PC-3 (cell line): ENCODE measurements at regions of chr20 and their contacts with region 1.

Region 1: DNA sequence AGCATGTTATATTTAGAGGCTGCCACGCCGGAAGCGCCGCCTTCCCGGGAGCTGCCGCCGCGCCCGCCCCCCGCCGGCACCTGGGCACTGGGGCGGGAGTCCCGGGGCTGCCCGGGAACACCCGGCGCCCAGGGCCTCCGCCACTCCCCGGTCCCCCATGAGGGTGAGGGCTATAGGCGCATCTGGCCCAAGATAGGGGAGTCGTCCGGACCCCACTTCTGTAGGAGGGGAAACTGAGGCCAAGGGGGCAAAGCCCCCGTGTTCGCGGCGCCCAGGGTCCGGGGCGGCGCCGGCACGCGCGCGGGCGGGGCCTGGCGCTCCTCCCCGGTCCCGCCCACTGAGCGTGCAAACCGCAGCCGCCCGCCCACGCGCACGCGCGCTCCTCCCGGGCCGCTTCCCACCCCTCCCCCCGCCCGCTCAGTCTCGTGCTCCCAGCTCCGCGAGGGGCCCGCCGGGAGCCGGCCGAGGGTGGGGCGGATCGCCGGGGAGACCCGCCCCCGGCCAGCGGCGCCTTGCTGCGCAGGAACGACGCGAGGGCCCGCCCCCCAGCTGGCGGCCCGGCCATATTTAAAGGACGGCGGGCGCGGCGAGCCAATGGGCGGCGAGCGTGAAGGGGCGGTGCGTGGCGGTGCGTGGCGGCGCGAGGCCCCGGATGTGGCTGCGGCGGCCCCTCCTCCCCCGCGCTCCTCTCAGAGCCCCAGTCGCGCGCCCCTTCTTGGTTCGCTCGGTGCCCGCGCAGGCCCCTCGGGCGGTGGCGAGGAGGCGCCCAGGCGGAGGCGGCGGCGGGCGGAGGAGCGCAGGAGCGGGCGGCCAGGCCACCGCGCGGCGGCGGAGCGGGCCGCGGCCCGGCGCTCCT is at the start of gene LSM14B:
- DNase-seq: peak; percentile 98
- ATAC-seq: peak; percentile 77
- H3K4me3 ChIP-seq: peak within 1 kb of the TSS; percentile 85
- H3K27ac ChIP-seq: peak within 1 kb of the TSS; percentile 78
- H3K4me1 ChIP-seq: peaks cover 14% of the 10 kb centered on the region; the same call in 1 of the 2 replicates
- H3K27me3 ChIP-seq: no peaks in the 10 kb centered on the region
- CTCF ChIP-seq: no peak
- total RNA-seq, gene LSM14B: 50.1 and 51.8 TPM in 2 replicates

Region 2: DNA sequence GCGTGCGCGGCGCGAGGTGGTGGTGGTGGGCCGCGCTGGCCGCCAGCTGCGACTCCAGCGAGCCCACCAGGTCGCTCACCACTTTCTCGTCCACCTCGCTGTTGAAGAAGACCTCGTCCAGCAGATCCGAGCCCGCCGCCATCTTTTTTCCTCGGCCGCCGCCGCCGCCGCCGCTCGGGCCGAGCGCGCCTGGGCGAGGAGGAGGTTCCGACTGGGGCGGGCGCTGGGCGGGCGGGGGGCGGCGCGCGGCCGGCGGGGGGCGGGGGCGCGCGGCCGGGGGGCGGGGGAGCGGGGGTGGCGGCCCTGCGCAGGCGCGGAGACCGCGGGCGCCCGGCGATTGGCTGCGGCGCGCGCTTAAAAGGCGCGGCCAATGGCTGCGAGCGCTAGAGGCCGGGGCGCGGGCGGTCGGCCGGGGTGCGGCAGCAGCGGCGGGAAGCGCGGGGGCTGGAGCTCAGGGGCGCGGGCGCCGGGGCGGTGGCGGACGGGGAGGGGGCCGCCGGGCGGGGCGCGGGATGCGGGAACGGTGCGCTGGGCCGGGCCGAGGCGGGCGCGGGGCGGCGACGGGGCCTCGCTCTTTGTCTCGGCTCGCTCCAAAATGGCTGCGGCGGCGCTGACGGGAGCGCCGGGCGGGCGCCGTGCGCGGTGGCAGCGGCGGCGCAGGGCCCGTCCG is 56.2 kb before region 1 on chr20 and contains the start of gene TAF4:
- CTCF ChIA-PET with region 1: no interaction called
- POLR2A ChIA-PET with region 1: interaction called, 10 read pairs
- intact Hi-C with region 1: loop called (anchors 2 kb)
- DNase-seq: peak; percentile 78
- ATAC-seq: peak; percentile 47
- H3K4me3 ChIP-seq: peak within 1 kb of the TSS; percentile 83
- H3K27ac ChIP-seq: peak within 1 kb of the TSS; percentile 19; the same call in 1 of the 2 replicates
- H3K4me1 ChIP-seq: peaks cover 39% of the 10 kb centered on the region
- H3K27me3 ChIP-seq: no peaks in the 10 kb centered on the region
- CTCF ChIP-seq: no peak
- total RNA-seq, gene TAF4: 9.6 and 15.1 TPM in 2 replicates

Region 3: GRCh38 chr20:62136283-62137091 is 14.5 kb after region 1 on chr20:
- CTCF ChIA-PET with region 1: interaction called, 4 read pairs
- POLR2A ChIA-PET with region 1: no interaction called
- intact Hi-C with region 1: loop called (anchors 2 kb)
- DNase-seq: peak; percentile 82
- ATAC-seq: peak; percentile 68
- H3K4me3 ChIP-seq: no peak overlapping the region
- H3K27ac ChIP-seq: no peak overlapping the region
- H3K4me1 ChIP-seq: peaks cover 10% of the 10 kb centered on the region
- H3K27me3 ChIP-seq: no peaks in the 10 kb centered on the region
- CTCF ChIP-seq: peak; percentile 96